ENCODE measurements at regions of chr15 and their contacts with region 1.

Region 1: DNA sequence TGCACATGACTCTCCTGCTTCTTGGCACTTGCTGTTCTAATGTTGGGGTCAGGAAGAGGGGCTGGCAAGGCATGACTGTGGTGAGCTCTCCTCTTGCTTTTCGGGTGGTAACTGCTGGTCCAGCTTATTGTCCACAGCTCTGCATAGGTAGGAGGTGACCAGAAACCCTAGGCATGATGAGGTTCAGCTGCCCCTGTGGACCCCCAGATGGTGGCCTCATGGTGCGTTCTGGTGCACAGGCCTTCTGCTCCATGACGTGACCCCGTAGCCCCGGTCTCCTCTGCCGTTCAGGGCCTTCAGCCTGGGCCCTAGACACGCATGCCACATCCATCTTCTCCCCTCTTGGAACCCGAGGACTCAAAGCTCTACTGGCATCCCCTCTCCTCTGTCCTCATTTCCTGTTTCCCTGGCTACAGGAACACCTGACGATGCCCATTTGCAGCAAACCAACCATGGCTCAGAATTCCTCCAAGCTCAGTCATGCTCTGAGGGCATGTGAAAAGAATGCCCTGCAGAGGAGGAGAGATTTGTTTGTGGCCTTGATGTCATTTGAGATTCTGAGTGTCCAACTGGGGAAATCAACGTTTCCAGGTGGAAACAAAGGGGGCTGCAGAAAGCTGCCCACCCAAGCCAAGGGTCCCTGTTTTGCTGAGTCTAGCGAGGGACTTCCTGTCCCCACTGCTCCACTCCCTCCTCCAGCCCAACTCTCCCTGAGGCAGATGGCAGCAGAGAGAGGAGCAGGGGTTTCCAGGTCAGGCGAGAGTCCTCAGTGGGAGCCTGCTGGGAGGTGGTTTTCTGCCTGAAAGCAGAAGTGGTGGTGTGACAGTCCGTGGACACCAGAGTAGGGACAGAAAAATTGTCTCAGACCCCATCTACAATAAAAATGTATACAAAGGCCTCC is 198.7 kb upstream of the LYSMD4 start:
- DNase-seq: no peak
- ATAC-seq: no peak

Region 2: DNA sequence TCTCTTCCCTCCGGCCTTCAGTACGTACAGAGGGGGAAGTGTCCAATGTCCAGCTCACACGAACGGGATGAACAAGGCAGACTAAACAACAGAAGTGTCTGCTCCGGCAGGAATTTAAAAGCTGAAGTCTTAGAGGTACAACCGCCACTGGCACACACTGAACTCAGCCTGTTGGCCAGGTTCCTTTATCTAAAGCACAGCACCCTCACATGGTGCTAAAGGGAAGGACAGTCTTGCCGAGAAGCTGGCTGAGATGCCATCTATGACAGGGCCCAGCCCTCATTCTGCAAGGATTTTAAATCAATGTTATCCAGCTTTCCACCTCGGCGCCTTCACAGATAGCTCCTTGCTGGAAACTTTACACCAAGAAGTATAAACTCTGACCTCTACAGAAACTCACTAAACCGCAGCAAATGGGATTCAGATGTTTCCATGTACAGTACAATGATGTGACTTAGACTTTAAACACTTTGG is 407.1 kb after region 1 on chr15:
- intact Hi-C with region 1: loop called (anchors 10 kb)
- DNase-seq: peak; percentile 53
- ATAC-seq: peak; percentile 53

Region 3: DNA sequence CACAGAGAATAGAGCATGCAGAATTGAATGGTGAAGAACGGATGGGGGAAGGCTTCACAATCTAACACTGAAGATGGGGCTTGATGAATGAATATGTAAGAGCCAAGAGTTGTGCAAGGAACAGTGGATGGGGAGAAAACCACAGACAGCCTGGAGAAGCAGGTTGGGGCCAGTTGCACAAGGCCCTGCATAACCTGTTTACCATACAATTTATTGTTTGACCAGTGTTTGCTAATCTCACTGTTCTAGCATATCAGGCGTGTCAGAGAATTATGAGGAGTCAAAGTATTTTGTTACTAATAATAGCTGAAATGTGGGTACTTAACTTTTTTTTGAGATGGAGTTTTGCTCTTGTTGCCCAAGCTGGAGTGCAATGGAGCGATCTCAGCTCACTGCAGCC is 633.6 kb after region 1 on chr15:
- intact Hi-C with region 1: loop called (anchors 10 kb)
- DNase-seq: no peak
- ATAC-seq: no peak

Measured in left ventricle myocardium superior (tissue), 1 donor.